ENCODE measurements at regions of chrX and their contacts with region 1.

Region 1: GRCh38 chrX:9988762-9989161 is 21.6 kb downstream of the CLDN34 start:
- DNase-seq: no peak
- H3K4me3 ChIP-seq: no peak overlapping the region
- H3K27ac ChIP-seq: no peak overlapping the region
- H3K4me1 ChIP-seq: no peaks in the 10 kb centered on the region
- H3K27me3 ChIP-seq: no peaks in the 10 kb centered on the region
- CTCF ChIP-seq: peak; percentile 14 to 64 (median 48)
- POLR2A ChIP-seq: no peak

Region 2: DNA sequence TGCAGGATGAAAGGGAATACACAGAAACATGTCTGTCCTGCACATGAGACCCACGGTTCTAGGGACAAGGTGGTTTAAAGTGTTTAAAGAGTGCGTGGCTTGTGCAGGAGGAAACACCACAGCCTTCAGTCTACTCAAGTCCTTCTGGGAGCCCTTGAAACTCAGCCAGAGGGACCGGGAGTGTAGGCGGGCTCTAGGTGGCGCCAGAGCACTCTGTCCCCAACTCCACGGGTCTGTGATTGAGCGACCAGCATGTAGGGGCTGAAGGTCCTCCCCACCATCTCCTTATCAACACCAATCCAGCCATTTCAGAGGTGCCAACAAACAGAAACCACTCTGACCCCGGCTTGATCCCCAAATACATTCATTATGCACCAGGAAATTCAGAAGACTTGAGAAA is 103.6 kb before region 1 on chrX:
- intact Hi-C with region 1: loop called in 1 of 2 experiments (anchors 10 kb)
- DNase-seq: peak; percentile 61 to 84 (median 73)
- H3K4me3 ChIP-seq: no peak overlapping the region
- H3K27ac ChIP-seq: no peak overlapping the region
- H3K4me1 ChIP-seq: peaks cover 3 to 14% of the 10 kb centered on the region in 2 donors
- H3K27me3 ChIP-seq: no peaks in the 10 kb centered on the region
- CTCF ChIP-seq: peak; percentile 29 to 57 (median 46)
- POLR2A ChIP-seq: no peak